GM12878 (cell line): ENCODE measurements at regions of chr17 and their contacts with region 1.

Region 1: DNA sequence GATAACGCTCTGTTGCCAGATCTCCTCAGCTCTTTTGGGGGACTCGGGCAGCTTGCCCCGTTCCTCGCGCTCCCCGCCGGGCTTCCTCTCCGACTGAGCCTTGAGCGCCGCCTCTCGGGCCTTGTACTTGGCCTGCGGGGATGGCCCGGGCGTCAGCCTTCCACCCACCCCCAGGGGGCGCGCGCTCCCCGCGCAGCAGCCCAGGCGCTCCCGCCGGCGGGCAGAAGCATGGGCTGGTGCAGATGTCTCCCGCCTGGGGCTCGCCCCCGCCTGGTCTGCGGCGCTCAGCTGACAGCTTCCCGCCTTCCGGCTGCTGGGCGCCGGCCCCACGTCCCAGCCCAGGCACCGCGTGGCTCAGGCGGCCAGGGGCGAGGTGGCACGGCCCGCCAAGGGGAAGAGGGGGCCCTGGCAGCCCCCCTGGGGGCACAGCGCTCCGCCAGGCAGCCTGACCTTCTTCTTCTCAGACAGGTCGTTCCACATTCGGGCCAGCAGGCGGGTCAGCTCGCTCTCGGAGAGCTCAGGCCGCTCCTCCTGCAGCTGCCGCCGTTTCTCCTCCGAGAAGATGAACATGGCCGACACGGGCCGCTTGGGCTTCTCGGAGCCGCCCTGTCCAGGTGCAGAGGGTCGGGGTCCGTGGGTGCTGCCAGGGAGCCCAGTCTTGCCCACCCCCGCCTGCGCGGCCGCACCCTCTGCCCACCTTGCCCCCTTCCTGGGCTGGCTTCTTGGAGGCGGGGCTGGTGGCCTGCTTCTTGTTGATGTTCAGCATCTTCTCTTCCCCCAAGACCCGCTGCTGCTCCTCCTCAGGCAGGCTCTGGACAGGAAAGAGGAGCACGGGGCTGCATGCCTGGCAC is 8.9 kb downstream of the UBTF start:
- DNase-seq: no peak
- ATAC-seq: peak; percentile 98
- H3K4me3 ChIP-seq: peak overlapping the region; percentile 54; the same call in 1 of the 2 replicates
- H3K27ac ChIP-seq: peak overlapping the region; percentile 82
- H3K4me1 ChIP-seq: peaks cover 22% of the 10 kb centered on the region
- H3K27me3 ChIP-seq: no peaks in the 10 kb centered on the region
- CTCF ChIP-seq: peak; percentile 98 to 100 (median 99); a peak in 5 of 6 replicates
- EP300 ChIP-seq: no peak
- POLR2A ChIP-seq: peak; percentile 79
- RAD21 ChIP-seq: peak; percentile 91

Region 2: GRCh38 chr17:44095642-44096496 is 114.7 kb before region 1 on chr17:
- CTCF ChIA-PET with region 1: no interaction called
- POLR2A ChIA-PET with region 1: no interaction called
- RAD21 ChIA-PET with region 1: no interaction called
- SMC1A ChIA-PET with region 1: no interaction called
- in situ Hi-C with region 1: no loop called
- intact Hi-C with region 1: no loop called
- DNase-seq: no peak
- ATAC-seq: peak; percentile 80
- H3K4me3 ChIP-seq: peak overlapping the region; percentile 31; the same call in 1 of the 2 replicates
- H3K27ac ChIP-seq: peak overlapping the region; percentile 67
- H3K4me1 ChIP-seq: peaks cover 24% of the 10 kb centered on the region
- H3K27me3 ChIP-seq: no peaks in the 10 kb centered on the region
- CTCF ChIP-seq: no peak
- EP300 ChIP-seq: no peak
- POLR2A ChIP-seq: 0 out of 2 replicates have a peak, but pooled peaks have one; percentile 28
- RAD21 ChIP-seq: no peak

Region 3: DNA sequence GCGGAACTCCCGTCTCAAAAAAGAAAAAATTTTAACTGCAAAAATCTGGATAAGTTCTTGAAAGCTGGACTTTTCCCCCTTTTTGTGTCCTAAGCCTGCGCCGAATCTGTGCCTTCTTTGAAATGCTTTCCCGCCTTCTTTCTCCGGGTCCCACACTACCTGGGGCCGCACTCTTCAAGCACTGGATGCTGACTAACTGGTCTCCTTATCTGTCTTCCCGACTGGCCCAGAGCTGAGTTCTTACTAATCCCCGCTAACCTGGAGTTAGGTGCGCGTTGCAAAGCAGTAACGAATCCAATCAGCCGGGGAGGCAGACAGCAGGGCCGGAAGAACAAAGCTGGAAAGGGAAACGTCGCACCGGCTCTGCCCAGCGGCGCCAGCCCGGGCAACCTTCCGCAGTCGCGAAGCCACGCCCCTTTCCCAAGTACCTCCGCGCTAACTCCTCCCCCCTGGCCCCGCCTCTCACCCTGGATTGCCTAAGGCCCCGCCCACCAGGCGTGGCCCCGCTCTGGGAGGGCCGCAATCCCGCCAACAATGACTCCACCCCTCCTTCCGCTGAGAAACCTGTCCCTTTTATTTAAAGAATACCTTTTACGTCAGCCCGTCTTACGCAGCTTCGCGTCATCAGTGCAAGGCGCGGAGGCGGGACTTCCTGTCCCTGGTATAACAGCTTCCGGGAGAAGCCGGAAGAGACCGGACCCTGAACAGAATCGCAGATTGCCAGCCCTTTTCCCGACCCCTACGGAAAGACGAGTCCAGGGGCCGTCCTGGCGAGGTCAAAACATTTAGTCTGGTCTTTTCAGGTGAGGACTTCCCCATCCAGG is 24.0 kb before region 1 on chr17 and contains the start of gene TMUB2:
- CTCF ChIA-PET with region 1: interaction called, 12 read pairs
- POLR2A ChIA-PET with region 1: interaction called, 7 read pairs
- RAD21 ChIA-PET with region 1: interaction called, 13 read pairs
- SMC1A ChIA-PET with region 1: interaction called, 11 read pairs
- in situ Hi-C with region 1: no loop called
- intact Hi-C with region 1: no loop called
- DNase-seq: peak; percentile 98
- ATAC-seq: peak; percentile 88
- H3K4me3 ChIP-seq: peak within 1 kb of the TSS; percentile 97
- H3K27ac ChIP-seq: peak within 1 kb of the TSS; percentile 97
- H3K4me1 ChIP-seq: peaks cover 4% of the 10 kb centered on the region
- H3K27me3 ChIP-seq: no peaks in the 10 kb centered on the region
- CTCF ChIP-seq: no peak
- EP300 ChIP-seq: no peak
- POLR2A ChIP-seq: peak; percentile 94
- RAD21 ChIP-seq: no peak
- polyA plus RNA-seq, gene TMUB2: 4.3 to 5.9 TPM

Region 4: GRCh38 chr17:44324571-44325275 is 114.2 kb after region 1 on chr17 and contains the start of gene SLC25A39:
- CTCF ChIA-PET with region 1: interaction called, 77 read pairs
- POLR2A ChIA-PET with region 1: interaction called, 10 read pairs
- RAD21 ChIA-PET with region 1: interaction called, 46 read pairs
- SMC1A ChIA-PET with region 1: interaction called, 38 read pairs
- in situ Hi-C with region 1: no loop called
- intact Hi-C with region 1: no loop called
- DNase-seq: no peak
- ATAC-seq: peak; percentile 80
- H3K4me3 ChIP-seq: peak within 1 kb of the TSS; percentile 97
- H3K27ac ChIP-seq: peak within 1 kb of the TSS; percentile 96
- H3K4me1 ChIP-seq: peaks cover 8% of the 10 kb centered on the region
- H3K27me3 ChIP-seq: no peaks in the 10 kb centered on the region
- CTCF ChIP-seq: no peak
- EP300 ChIP-seq: no peak
- POLR2A ChIP-seq: peak; percentile 88
- RAD21 ChIP-seq: no peak
- polyA plus RNA-seq, gene SLC25A39: 3.5 to 7.5 TPM

Region 5: DNA sequence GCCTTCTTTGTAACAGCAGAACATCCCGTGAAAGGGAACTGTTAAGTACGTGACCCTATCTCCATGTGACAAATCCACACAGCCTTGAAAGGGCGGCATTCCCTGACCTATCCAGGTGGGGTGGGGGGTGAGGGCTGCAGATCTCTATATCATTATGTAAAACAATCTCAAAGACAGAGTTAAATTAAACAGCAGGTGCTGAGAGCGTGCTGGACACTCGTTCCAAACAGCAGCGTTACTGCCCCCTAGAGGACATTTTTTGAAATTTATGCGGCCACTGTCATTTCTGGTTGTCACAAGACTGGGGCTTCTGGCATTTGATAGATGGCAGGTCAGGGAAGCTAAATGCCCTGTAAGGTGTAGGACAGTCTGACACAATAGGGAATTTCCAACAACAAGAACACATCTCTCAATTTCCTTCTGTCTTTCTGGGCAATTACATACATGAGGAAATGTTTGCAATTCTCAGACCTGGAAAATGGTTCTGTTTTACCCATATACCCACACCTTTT is 120.7 kb after region 1 on chr17:
- CTCF ChIA-PET with region 1: interaction called, 77 read pairs
- POLR2A ChIA-PET with region 1: interaction called, 10 read pairs
- RAD21 ChIA-PET with region 1: interaction called, 46 read pairs
- SMC1A ChIA-PET with region 1: interaction called, 38 read pairs
- in situ Hi-C with region 1: no loop called
- intact Hi-C with region 1: loop called (anchors 1 kb)
- DNase-seq: no peak
- ATAC-seq: peak; percentile 72
- H3K4me3 ChIP-seq: no peak overlapping the region
- H3K27ac ChIP-seq: no peak overlapping the region
- H3K4me1 ChIP-seq: peaks cover 14% of the 10 kb centered on the region
- H3K27me3 ChIP-seq: no peaks in the 10 kb centered on the region
- CTCF ChIP-seq: peak; percentile 69 to 85 (median 84)
- EP300 ChIP-seq: no peak
- POLR2A ChIP-seq: no peak
- RAD21 ChIP-seq: peak; percentile 83

Region 6: DNA sequence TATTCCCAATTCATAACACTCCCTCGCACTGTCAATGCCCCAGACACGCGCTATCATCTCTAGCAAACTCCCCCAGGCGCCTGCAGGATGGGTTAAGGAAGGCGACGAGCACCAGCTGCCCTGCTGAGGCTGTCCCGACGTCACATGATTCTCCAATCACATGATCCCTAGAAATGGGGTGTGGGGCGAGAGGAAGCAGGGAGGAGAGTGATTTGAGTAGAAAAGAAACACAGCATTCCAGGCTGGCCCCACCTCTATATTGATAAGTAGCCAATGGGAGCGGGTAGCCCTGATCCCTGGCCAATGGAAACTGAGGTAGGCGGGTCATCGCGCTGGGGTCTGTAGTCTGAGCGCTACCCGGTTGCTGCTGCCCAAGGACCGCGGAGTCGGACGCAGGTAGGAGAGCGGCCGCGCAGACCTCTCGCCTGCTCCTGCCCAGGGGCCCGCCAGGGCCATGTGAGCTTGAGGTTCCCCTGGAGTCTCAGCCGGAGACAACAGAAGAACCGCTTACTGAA is 134.4 kb after region 1 on chr17 and contains the start of gene GRN:
- CTCF ChIA-PET with region 1: interaction called, 135 read pairs
- POLR2A ChIA-PET with region 1: interaction called, 16 read pairs
- RAD21 ChIA-PET with region 1: interaction called, 31 read pairs
- SMC1A ChIA-PET with region 1: interaction called, 16 read pairs
- in situ Hi-C with region 1: no loop called
- intact Hi-C with region 1: no loop called
- DNase-seq: peak; percentile 92
- ATAC-seq: peak; percentile 84
- H3K4me3 ChIP-seq: peak within 1 kb of the TSS; percentile 87
- H3K27ac ChIP-seq: peak within 1 kb of the TSS; percentile 92
- H3K4me1 ChIP-seq: peaks cover 37% of the 10 kb centered on the region
- H3K27me3 ChIP-seq: no peaks in the 10 kb centered on the region
- CTCF ChIP-seq: no peak
- EP300 ChIP-seq: no peak
- POLR2A ChIP-seq: peak; percentile 92
- RAD21 ChIP-seq: no peak
- polyA plus RNA-seq, gene GRN: 22.3 to 33.2 TPM

Region 7: DNA sequence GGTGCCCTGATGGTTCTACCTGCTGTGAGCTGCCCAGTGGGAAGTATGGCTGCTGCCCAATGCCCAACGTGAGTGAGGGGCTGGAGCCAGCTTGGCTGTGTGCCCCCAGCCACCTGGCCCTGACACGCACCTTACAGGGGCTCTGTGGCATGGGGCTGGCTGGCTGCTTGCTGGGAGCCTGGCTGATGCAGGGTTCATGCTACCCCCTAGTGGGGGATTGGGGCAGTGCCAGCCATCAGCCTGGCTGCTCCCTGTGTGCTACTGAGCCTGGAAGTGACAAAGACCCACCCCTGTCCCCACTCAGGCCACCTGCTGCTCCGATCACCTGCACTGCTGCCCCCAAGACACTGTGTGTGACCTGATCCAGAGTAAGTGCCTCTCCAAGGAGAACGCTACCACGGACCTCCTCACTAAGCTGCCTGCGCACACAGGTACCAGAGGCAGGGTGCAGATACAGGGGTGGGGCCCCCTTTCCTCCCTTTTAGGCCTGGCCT is 140.2 kb after region 1 on chr17:
- CTCF ChIA-PET with region 1: interaction called, 135 read pairs
- POLR2A ChIA-PET with region 1: interaction called, 16 read pairs
- RAD21 ChIA-PET with region 1: interaction called, 31 read pairs
- SMC1A ChIA-PET with region 1: interaction called, 16 read pairs
- in situ Hi-C with region 1: no loop called
- intact Hi-C with region 1: no loop called
- DNase-seq: peak; percentile 27
- ATAC-seq: peak; percentile 53
- H3K4me3 ChIP-seq: no peak overlapping the region
- H3K27ac ChIP-seq: no peak overlapping the region
- H3K4me1 ChIP-seq: peaks cover 40% of the 10 kb centered on the region
- H3K27me3 ChIP-seq: no peaks in the 10 kb centered on the region; a peak in 1 of 4 replicates
- CTCF ChIP-seq: peak; percentile 87 to 97 (median 88)
- EP300 ChIP-seq: no peak
- POLR2A ChIP-seq: no peak; the same call in 1 of the 2 replicates
- RAD21 ChIP-seq: peak; percentile 72